CD8-positive, alpha-beta memory T cell (primary cell): ENCODE measurements at regions of chr22 and their contacts with region 1.

Region 1: GRCh38 chr22:22959147-22959827 is 71.7 kb downstream of the IGLL5 start:
- DNase-seq: peak; percentile 59 to 80 (median 70)
- H3K4me3 ChIP-seq: no peak overlapping the region
- H3K4me3 Mint-ChIP-seq: no peak overlapping the region
- H3K27ac ChIP-seq: no peak overlapping the region
- H3K27ac Mint-ChIP-seq: no peak overlapping the region
- H3K4me1 ChIP-seq: no peaks in the 10 kb centered on the region
- H3K4me1 Mint-ChIP-seq: peaks cover 0 to 6% (median 3%) of the 10 kb centered on the region in 3 donors
- H3K27me3 ChIP-seq: peaks cover 4% of the 10 kb centered on the region
- H3K27me3 Mint-ChIP-seq: peaks cover 15 to 27% of the 10 kb centered on the region in 2 donors

Region 2: DNA sequence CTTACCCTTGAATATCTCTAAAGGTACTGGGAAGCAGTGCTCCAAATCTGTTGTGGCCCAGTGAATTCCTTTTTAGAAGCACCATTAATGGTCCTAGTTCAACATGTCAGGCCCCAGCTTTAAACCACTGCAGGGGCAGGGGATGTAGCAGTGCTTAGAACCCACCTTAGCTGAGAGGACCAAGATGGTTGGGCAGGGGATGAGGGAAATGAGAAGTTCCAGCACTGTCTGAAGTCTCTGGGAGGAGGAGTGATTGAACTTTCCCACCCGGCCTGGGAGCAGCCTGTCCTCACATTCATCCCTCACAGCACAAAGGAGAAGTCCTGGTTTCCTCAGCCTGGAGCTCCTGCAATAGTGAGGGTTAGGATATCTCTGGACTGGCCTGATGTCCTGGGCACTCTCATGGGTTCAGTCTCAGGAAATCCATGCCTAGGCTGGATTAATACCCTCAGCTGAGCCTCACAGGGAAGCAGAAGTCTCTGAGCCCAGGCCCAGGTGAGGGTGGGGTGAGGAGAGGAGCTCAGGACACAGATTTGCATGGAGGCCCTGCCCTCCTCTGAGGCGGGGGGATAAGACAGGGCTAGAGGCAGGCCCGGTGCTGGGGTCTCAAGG is 371.6 kb before region 1 on chr22:
- CTCF ChIA-PET with region 1: interaction called, 21 read pairs
- POLR2A ChIA-PET with region 1: interaction called, 3 read pairs
- DNase-seq: no peak
- H3K4me3 ChIP-seq: no peak overlapping the region
- H3K4me3 Mint-ChIP-seq: no peak overlapping the region
- H3K27ac ChIP-seq: no peak overlapping the region
- H3K27ac Mint-ChIP-seq: no peak overlapping the region
- H3K4me1 ChIP-seq: no peaks in the 10 kb centered on the region
- H3K4me1 Mint-ChIP-seq: peaks cover 0 to 4% (median 0%) of the 10 kb centered on the region in 3 donors
- H3K27me3 ChIP-seq: peaks cover 3% of the 10 kb centered on the region
- H3K27me3 Mint-ChIP-seq: peaks cover 22 to 37% of the 10 kb centered on the region in 2 donors

Region 3: DNA sequence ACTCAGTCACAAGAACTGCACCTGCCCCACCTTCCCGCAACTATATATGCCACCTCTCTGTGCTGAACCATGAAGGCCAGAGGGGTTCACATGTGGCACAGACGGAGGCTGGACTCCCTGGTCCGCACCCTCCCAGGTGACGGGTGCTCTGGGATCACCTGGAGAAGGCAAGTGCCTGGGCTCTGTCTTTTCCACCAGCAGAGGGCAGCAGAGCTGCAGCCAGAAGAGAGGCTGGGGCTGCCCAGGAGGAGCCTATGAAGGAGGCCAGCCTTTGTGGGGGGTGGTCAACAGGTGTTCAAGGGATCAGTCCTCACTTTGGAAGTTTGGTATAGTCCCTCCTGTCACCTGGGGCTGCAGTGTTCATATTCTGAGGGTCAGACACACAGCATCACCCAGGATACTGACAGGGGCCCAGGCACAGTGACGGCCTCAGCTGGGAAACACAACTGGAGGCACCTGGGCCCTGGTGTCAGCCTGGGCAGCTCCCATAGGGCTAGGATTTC is 110.9 kb before region 1 on chr22:
- CTCF ChIA-PET with region 1: no interaction called
- POLR2A ChIA-PET with region 1: no interaction called
- DNase-seq: peak; percentile 49 to 83 (median 59)
- H3K4me3 ChIP-seq: no peak overlapping the region
- H3K4me3 Mint-ChIP-seq: peak overlapping the region in 3 of 7 donors; percentile 27 to 74 (median 38)
- H3K27ac ChIP-seq: no peak overlapping the region
- H3K27ac Mint-ChIP-seq: peak overlapping the region in 4 of 8 donors; percentile 47 to 67 (median 66)
- H3K4me1 ChIP-seq: peaks cover 10% of the 10 kb centered on the region
- H3K4me1 Mint-ChIP-seq: peaks cover 56 to 67% (median 65%) of the 10 kb centered on the region in 3 donors
- H3K27me3 ChIP-seq: no peaks in the 10 kb centered on the region
- H3K27me3 Mint-ChIP-seq: no peaks in the 10 kb centered on the region

Region 4: DNA sequence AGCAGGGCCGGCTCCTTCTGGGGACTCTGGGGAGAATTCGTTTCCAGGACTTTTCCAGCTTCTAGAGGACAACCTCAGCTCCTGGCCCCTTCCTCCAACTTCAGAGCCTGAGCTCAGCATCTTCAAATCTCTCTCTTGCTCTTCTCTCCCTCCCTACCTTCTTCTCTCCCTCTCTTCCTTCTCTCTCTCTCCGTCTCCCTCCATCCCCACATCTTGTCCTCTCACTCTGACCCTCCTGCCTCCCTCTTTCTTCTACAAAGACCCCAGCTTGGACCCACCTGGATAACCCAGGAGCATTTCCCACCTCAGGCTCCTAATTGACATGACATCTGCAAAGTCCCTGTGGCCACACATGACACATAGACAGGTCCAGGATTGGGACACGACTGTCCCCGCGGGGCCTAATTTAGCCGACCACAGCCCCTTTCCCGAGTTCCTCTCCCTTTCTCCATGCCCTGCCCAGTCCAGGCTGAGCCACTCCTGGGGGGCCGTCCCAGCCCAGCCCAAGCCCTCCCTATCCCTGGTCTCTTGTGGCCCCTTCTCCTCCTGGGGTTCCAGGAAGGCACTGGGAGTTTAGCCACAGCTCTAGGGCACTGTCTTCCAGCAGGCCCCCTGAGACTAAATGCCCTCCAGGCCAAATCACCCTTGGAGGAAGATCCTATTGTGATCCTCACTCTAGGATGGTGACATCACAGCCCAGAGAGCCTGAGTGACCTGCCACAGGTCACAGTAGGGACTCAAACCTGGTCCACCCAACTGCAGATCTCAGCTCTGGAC is 34.7 kb before region 1 on chr22:
- CTCF ChIA-PET with region 1: no interaction called
- POLR2A ChIA-PET with region 1: no interaction called
- DNase-seq: no peak
- H3K4me3 ChIP-seq: no peak overlapping the region
- H3K4me3 Mint-ChIP-seq: no peak overlapping the region
- H3K27ac ChIP-seq: no peak overlapping the region
- H3K27ac Mint-ChIP-seq: peak overlapping the region in 1 of 8 donors; percentile 8
- H3K4me1 ChIP-seq: peaks cover 11% of the 10 kb centered on the region
- H3K4me1 Mint-ChIP-seq: peaks cover 7 to 34% (median 17%) of the 10 kb centered on the region in 3 donors
- H3K27me3 ChIP-seq: peaks cover 14% of the 10 kb centered on the region
- H3K27me3 Mint-ChIP-seq: peaks cover 0 to 4% of the 10 kb centered on the region in 2 donors

Region 5: DNA sequence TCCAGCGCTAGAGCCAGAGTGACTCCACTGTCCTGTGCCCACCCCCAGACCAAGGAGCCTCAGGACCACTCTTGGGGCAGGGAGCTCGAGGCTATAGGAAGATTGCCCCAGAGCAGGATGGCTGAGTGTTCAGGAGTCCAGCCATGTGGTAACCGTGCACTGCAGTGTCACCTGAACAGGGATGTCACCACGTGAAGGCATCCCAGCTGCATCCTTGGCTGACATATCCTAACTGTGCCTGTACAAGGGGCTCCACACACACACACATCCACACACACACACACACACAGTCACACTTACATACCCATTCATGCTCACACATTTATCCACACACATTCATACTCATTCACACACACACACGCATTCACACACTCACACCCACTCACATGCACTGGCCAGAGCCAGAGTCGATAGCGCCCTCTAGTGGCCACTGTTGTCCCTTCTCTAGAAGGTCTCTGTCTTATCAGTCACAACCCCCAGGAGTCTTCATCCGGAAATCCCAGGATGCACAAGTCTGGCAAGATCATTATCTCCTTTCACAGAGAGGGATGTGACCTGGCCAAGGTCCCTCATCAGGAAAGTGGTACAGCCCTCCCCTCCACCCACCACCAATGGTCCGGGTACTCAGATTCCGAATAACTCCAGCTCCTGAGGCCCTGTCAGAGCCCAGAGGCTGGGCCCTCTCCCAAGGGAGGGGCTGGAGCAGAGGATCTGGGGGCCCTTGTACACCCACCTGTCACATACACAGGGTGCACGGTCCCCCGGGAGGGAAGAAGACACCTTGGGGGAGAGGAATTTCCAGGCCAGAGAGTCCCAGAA is 16.6 kb before region 1 on chr22:
- CTCF ChIA-PET with region 1: interaction called, 17 read pairs
- POLR2A ChIA-PET with region 1: no interaction called
- DNase-seq: peak; percentile 34 to 84 (median 70)
- H3K4me3 ChIP-seq: no peak overlapping the region
- H3K4me3 Mint-ChIP-seq: no peak overlapping the region
- H3K27ac ChIP-seq: no peak overlapping the region
- H3K27ac Mint-ChIP-seq: peak overlapping the region in 3 of 8 donors; percentile 14 to 77 (median 30)
- H3K4me1 ChIP-seq: no peaks in the 10 kb centered on the region
- H3K4me1 Mint-ChIP-seq: peaks cover 2 to 11% (median 5%) of the 10 kb centered on the region in 3 donors
- H3K27me3 ChIP-seq: no peaks in the 10 kb centered on the region
- H3K27me3 Mint-ChIP-seq: no peaks in the 10 kb centered on the region

Region 6: GRCh38 chr22:23066200-23067022 is 107.1 kb after region 1 on chr22:
- CTCF ChIA-PET with region 1: no interaction called
- POLR2A ChIA-PET with region 1: no interaction called
- DNase-seq: peak in 1 of 5 donors; percentile 32
- H3K4me3 ChIP-seq: no peak overlapping the region
- H3K4me3 Mint-ChIP-seq: peak overlapping the region in 1 of 7 donors; percentile 16
- H3K27ac ChIP-seq: no peak overlapping the region
- H3K27ac Mint-ChIP-seq: peak overlapping the region in 4 of 8 donors; percentile 11 to 82 (median 30)
- H3K4me1 ChIP-seq: peaks cover 12% of the 10 kb centered on the region
- H3K4me1 Mint-ChIP-seq: peaks cover 12 to 23% (median 15%) of the 10 kb centered on the region in 3 donors
- H3K27me3 ChIP-seq: peaks cover 6% of the 10 kb centered on the region
- H3K27me3 Mint-ChIP-seq: peaks cover 0 to 2% of the 10 kb centered on the region in 2 donors

Region 7: GRCh38 chr22:23077627-23078461 is 118.6 kb after region 1 on chr22:
- CTCF ChIA-PET with region 1: no interaction called
- POLR2A ChIA-PET with region 1: no interaction called
- DNase-seq: no peak
- H3K4me3 ChIP-seq: no peak overlapping the region
- H3K4me3 Mint-ChIP-seq: no peak overlapping the region
- H3K27ac ChIP-seq: no peak overlapping the region
- H3K27ac Mint-ChIP-seq: no peak overlapping the region
- H3K4me1 ChIP-seq: no peaks in the 10 kb centered on the region
- H3K4me1 Mint-ChIP-seq: peaks cover 0 to 7% (median 0%) of the 10 kb centered on the region in 3 donors
- H3K27me3 ChIP-seq: peaks cover 7% of the 10 kb centered on the region
- H3K27me3 Mint-ChIP-seq: peaks cover 6 to 16% of the 10 kb centered on the region in 2 donors

Region 8: DNA sequence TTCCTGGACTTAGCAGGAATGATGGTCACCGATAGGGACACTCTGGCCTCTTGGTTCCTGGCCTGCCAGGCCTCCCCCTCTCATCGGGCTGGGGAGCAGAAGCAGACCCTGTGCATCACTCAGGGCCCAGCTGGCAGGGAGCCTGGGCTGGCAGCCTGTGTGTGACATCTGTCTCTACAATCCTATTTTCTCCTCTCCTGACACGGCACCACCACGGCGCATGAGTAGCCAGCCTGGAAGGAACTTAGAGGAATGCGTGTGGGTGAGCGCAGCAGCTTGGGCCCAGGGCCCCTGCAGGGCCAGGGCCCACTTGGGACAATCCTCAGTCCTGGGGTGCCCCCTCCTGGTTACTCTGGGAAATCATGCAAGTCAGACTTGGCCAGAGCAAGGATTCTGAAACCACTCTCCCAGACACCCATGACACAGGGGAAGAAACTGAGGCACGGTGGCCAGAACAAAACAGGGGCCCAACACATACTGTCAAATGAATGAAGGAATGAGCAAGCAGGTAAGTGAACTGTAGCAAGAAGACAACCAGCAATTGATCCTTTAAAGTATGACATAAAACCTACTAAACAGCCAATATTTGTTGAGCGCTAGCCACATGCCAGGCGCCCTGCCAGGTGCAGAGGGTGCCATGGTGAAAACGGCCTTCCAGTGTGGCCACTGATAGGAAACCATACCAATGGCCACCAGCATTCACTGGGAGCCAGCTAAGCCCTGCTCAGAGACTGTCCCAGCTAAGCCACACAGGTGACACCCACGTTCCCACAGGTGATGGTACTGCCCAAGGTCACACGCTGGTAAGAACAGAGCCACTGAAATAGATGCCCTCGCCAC is 169.2 kb after region 1 on chr22:
- CTCF ChIA-PET with region 1: interaction called, 106 read pairs
- POLR2A ChIA-PET with region 1: no interaction called
- DNase-seq: peak; percentile 56 to 80 (median 62)
- H3K4me3 ChIP-seq: no peak overlapping the region
- H3K4me3 Mint-ChIP-seq: no peak overlapping the region
- H3K27ac ChIP-seq: no peak overlapping the region
- H3K27ac Mint-ChIP-seq: peak overlapping the region in 5 of 8 donors; percentile 10 to 83 (median 70)
- H3K4me1 ChIP-seq: no peaks in the 10 kb centered on the region
- H3K4me1 Mint-ChIP-seq: peaks cover 3 to 8% (median 5%) of the 10 kb centered on the region in 3 donors
- H3K27me3 ChIP-seq: peaks cover 15% of the 10 kb centered on the region
- H3K27me3 Mint-ChIP-seq: no peaks in the 10 kb centered on the region

Region 9: GRCh38 chr22:23281406-23282088 is 322.3 kb after region 1 on chr22:
- CTCF ChIA-PET with region 1: interaction called, 18 read pairs
- POLR2A ChIA-PET with region 1: no interaction called
- DNase-seq: peak; percentile 70 to 86 (median 71)
- H3K4me3 ChIP-seq: no peak overlapping the region
- H3K4me3 Mint-ChIP-seq: peak overlapping the region in 1 of 7 donors; percentile 63
- H3K27ac ChIP-seq: peak overlapping the region; percentile 17
- H3K27ac Mint-ChIP-seq: peak overlapping the region; percentile 14 to 84 (median 66)
- H3K4me1 ChIP-seq: peaks cover 16% of the 10 kb centered on the region
- H3K4me1 Mint-ChIP-seq: peaks cover 25 to 43% (median 28%) of the 10 kb centered on the region in 3 donors
- H3K27me3 ChIP-seq: no peaks in the 10 kb centered on the region
- H3K27me3 Mint-ChIP-seq: peaks cover 0 to 1% of the 10 kb centered on the region in 2 donors

Region 10: GRCh38 chr22:23385291-23386244 is 426.3 kb after region 1 on chr22:
- CTCF ChIA-PET with region 1: interaction called, 32 read pairs
- POLR2A ChIA-PET with region 1: no interaction called
- DNase-seq: peak; percentile 60 to 81 (median 69)
- H3K4me3 ChIP-seq: no peak overlapping the region
- H3K4me3 Mint-ChIP-seq: no peak overlapping the region
- H3K27ac ChIP-seq: no peak overlapping the region
- H3K27ac Mint-ChIP-seq: peak overlapping the region in 1 of 8 donors; percentile 51
- H3K4me1 ChIP-seq: no peaks in the 10 kb centered on the region
- H3K4me1 Mint-ChIP-seq: no peaks in the 10 kb centered on the region
- H3K27me3 ChIP-seq: no peaks in the 10 kb centered on the region
- H3K27me3 Mint-ChIP-seq: peaks cover 1 to 8% of the 10 kb centered on the region in 2 donors